Activated naive CD4-positive, alpha-beta T cell treated with anti-CD3 and anti-CD28 coated beads, Interleukin-2, amount 10 ng/mL, durations not matched to agents 7 days and 5 days (primary cell): ENCODE measurements at regions of chr1 and their contacts with region 1.

Region 1: GRCh38 chr1:92623187-92623778 is 136.6 kb upstream of the GFI1 start:
- DNase-seq: no peak
- H3K4me3 Mint-ChIP-seq: no peak overlapping the region
- H3K27ac Mint-ChIP-seq: no peak overlapping the region
- H3K4me1 Mint-ChIP-seq: peaks cover 2% of the 10 kb centered on the region
- H3K27me3 Mint-ChIP-seq: no peaks in the 10 kb centered on the region

Region 2: DNA sequence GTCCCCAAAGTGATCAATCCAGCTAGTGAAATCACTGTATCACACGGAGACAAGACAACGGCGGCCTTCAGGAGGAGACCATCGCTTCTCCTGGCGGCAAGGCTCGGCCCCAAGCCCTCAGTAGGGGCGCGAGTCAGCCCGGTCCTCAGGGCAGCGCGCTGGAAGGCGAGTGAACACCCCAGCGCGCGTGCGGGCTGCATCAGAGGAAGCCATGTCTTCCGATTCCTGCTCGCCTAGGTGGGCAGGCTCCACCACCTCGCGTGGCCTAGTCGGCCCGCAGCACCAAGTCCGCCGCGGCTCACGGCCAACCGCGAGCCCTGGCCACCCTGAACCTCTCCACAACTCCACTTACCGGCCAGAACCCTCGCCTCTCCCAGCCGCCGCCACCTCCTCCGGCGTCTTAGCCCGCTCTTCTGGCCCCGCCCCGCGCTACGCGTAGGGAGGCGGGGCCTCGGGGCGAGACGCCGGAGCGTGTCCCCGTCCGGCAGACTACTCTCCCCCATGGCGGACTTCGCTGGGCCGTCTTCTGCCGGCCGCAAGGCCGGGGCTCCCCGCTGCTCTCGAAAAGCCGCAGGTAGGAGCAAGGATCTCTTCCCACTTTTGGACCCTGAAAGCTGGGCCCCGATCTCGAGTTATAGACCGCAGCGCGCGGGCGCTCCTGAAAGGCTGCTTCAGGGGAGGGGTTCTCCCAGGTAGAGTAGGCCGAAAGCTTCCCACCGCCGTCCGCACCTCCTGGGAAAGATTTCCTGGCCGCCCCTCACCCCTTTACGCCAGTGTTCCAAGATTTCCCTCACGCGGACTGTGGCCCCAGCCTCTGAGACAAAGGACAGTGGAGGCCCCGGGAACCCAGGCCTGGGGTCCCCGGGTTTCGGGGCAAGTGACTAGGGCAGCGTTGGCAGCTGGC is 324.5 kb before region 1 on chr1 and contains the starts of genes GLMN and RPAP2:
- CTCF ChIA-PET with region 1: interaction called, 10 read pairs
- DNase-seq: peak; percentile 80
- H3K4me3 Mint-ChIP-seq: peak within 1 kb of the TSS; percentile 90
- H3K27ac Mint-ChIP-seq: peak within 1 kb of the TSS; percentile 95
- H3K4me1 Mint-ChIP-seq: peaks cover 46% of the 10 kb centered on the region
- H3K27me3 Mint-ChIP-seq: no peaks in the 10 kb centered on the region

Region 3: GRCh38 chr1:92310185-92310597 is 313.1 kb before region 1 on chr1:
- CTCF ChIA-PET with region 1: interaction called, 23 read pairs
- DNase-seq: no peak
- H3K4me3 Mint-ChIP-seq: no peak overlapping the region
- H3K27ac Mint-ChIP-seq: no peak overlapping the region
- H3K4me1 Mint-ChIP-seq: peaks cover 31% of the 10 kb centered on the region
- H3K27me3 Mint-ChIP-seq: no peaks in the 10 kb centered on the region